Activated CD4-positive, alpha-beta T cell treated with anti-CD3 and anti-CD28 coated beads for 36 hours (primary cell): ENCODE measurements at regions of chr1 and their contacts with region 1.

Region 1: DNA sequence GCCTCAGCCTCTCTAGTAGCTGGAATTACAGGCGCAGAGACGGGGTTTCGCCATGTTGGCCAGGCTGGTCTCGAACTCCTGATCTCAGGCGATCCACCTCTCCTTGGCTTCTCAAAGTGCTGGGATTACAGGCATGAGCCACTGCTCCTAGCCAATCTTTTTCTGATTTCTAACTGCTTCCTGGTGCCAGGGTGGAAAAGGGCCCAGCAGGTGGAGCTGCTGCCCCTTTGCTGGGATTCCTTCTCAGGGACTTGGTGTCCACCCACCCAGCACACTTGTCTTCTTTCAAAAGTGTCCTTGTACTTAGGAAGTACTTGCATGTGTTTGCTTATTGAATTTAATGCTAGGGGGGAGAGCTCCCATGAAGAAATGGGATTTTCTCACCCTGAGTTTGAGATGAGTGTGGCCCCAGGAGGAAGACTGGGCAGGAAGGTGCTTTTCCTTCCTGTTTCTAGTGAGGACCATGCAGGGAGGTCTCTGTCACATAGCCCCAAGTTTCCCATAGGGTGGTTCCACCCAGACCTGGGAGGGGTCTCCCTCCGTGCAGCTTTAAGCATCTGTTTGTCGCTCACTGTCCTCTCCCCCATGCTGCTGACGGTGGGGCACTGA is 14.2 kb downstream of the UTP11 start:
- DNase-seq: peak; percentile 80
- ATAC-seq: no peak
- H3K4me3 Mint-ChIP-seq: no peak overlapping the region
- H3K27ac Mint-ChIP-seq: peak overlapping the region; percentile 91
- H3K4me1 Mint-ChIP-seq: peaks cover 58% of the 10 kb centered on the region
- H3K27me3 Mint-ChIP-seq: no peaks in the 10 kb centered on the region

Region 2: DNA sequence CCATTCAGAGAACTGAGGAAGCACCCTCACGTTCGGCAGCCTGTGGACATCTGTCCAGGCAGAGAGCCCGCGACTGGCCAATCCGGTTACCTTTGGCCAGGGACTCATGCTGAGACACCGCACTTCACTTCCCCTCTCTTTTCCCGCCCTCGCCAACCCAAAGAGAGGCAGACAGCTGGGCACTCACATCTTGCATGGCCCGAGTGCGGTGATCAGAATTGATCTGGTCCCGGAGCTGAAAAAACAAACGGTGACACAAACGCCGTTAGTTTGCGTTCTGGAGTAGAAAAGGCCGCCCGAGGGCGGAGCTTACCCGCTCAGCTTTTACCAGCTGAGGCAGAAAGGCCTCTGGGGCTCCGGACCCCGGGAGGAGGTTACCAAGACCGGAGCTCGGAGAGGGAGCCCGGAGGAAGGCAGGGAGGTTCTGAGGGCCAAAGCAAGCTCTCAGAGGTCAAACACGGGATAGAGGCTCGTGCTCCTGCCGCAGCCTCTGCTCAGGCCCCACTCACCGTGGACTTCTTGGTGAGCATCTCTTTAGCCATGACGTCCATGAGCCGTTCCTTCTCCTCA is 37.2 kb before region 1 on chr1:
- CTCF ChIA-PET with region 1: interaction called, 8 read pairs
- POLR2A ChIA-PET with region 1: no interaction called
- intact Hi-C with region 1: loop called in 1 of 2 experiments (anchors 1 kb)
- DNase-seq: peak; percentile 67
- ATAC-seq: peak; percentile 31
- H3K4me3 Mint-ChIP-seq: peak overlapping the region; percentile 93
- H3K27ac Mint-ChIP-seq: peak overlapping the region; percentile 90
- H3K4me1 Mint-ChIP-seq: peaks cover 20% of the 10 kb centered on the region
- H3K27me3 Mint-ChIP-seq: no peaks in the 10 kb centered on the region

Region 3: DNA sequence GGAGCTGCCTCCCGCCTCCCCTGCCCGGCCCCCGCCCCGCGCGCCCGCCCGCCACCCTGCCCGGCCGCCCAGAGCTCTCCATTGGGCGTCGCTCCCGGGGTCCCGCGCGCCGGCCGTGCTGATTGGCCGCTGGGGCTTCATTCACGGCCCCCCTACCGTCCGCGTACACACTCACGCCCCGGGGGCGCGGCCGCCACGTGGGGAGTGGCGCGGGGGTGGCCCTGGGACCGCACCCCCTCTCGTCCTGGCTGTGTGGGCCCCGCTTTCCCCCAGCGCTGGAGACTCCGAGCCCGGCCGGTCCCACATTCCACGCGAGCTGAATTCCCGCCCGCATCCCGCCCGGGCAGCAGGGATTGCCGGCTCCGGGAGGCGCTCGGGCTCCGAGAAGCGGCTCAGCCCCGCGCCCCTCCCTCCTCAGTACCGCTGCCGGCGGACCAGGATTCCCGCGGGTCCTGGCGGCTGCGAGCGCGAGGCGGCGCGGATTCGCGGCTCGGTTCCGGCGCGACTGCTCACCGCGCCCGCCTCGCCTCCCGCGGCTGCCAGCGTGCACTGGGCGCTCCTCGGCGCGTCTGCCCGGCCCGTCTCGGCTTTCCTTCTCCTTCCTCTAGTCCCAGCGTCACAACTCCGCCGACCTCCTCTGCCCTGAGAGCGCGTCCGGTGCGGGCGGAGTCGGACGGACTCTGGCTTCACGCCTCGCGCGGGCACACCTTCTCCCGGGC is 20.3 kb after region 1 on chr1:
- CTCF ChIA-PET with region 1: interaction called, 6 read pairs
- POLR2A ChIA-PET with region 1: interaction called, 5 read pairs
- intact Hi-C with region 1: loop called in 1 of 2 experiments (anchors 1 kb)
- DNase-seq: peak; percentile 82
- ATAC-seq: peak; percentile 87
- H3K4me3 Mint-ChIP-seq: peak overlapping the region; percentile 64
- H3K27ac Mint-ChIP-seq: no peak overlapping the region
- H3K4me1 Mint-ChIP-seq: peaks cover 11% of the 10 kb centered on the region
- H3K27me3 Mint-ChIP-seq: peaks cover 41% of the 10 kb centered on the region

Region 4: GRCh38 chr1:38403667-38404066 is 377.0 kb after region 1 on chr1:
- CTCF ChIA-PET with region 1: no interaction called
- POLR2A ChIA-PET with region 1: no interaction called
- intact Hi-C with region 1: loop called in 1 of 2 experiments (anchors 10 kb)
- DNase-seq: peak; percentile 19
- ATAC-seq: no peak
- H3K4me3 Mint-ChIP-seq: no peak overlapping the region
- H3K27ac Mint-ChIP-seq: no peak overlapping the region
- H3K4me1 Mint-ChIP-seq: no peaks in the 10 kb centered on the region
- H3K27me3 Mint-ChIP-seq: peaks cover 13% of the 10 kb centered on the region

Region 5: GRCh38 chr1:38586993-38587646 is 560.4 kb after region 1 on chr1:
- CTCF ChIA-PET with region 1: interaction called, 3 read pairs
- POLR2A ChIA-PET with region 1: no interaction called
- intact Hi-C with region 1: loop called (anchors 1 to 5 kb)
- DNase-seq: peak; percentile 75
- ATAC-seq: peak; percentile 74
- H3K4me3 Mint-ChIP-seq: no peak overlapping the region
- H3K27ac Mint-ChIP-seq: no peak overlapping the region
- H3K4me1 Mint-ChIP-seq: peaks cover 8% of the 10 kb centered on the region
- H3K27me3 Mint-ChIP-seq: no peaks in the 10 kb centered on the region

Region 6: GRCh38 chr1:38859561-38860453 is 833.1 kb after region 1 on chr1 and contains the start of gene RRAGC:
- CTCF ChIA-PET with region 1: no interaction called
- POLR2A ChIA-PET with region 1: interaction called, 3 read pairs
- intact Hi-C with region 1: loop called in 1 of 2 experiments (anchors 1 kb)
- DNase-seq: peak; percentile 99
- ATAC-seq: peak; percentile 98
- H3K4me3 Mint-ChIP-seq: peak within 1 kb of the TSS; percentile 98
- H3K27ac Mint-ChIP-seq: peak within 1 kb of the TSS; percentile 91
- H3K4me1 Mint-ChIP-seq: peaks cover 58% of the 10 kb centered on the region
- H3K27me3 Mint-ChIP-seq: no peaks in the 10 kb centered on the region
- total RNA-seq, gene RRAGC: 15.8 to 19.0 TPM

Region 7: GRCh38 chr1:39691262-39692151 is 1664.8 kb after region 1 on chr1 and contains the start of gene HPCAL4:
- CTCF ChIA-PET with region 1: no interaction called
- POLR2A ChIA-PET with region 1: no interaction called
- intact Hi-C with region 1: loop called in 1 of 2 experiments (anchors 5 kb)
- DNase-seq: peak; percentile 91
- ATAC-seq: peak; percentile 94
- H3K4me3 Mint-ChIP-seq: peak within 1 kb of the TSS; percentile 68
- H3K27ac Mint-ChIP-seq: no peak within 1 kb of the TSS
- H3K4me1 Mint-ChIP-seq: peaks cover 36% of the 10 kb centered on the region
- H3K27me3 Mint-ChIP-seq: peaks cover 17% of the 10 kb centered on the region
- total RNA-seq, gene HPCAL4: 0.94 to 1.1 TPM